Mammary epithelial cell (primary cell): ENCODE measurements at regions of chr11 and their contacts with region 1.

Region 1: DNA sequence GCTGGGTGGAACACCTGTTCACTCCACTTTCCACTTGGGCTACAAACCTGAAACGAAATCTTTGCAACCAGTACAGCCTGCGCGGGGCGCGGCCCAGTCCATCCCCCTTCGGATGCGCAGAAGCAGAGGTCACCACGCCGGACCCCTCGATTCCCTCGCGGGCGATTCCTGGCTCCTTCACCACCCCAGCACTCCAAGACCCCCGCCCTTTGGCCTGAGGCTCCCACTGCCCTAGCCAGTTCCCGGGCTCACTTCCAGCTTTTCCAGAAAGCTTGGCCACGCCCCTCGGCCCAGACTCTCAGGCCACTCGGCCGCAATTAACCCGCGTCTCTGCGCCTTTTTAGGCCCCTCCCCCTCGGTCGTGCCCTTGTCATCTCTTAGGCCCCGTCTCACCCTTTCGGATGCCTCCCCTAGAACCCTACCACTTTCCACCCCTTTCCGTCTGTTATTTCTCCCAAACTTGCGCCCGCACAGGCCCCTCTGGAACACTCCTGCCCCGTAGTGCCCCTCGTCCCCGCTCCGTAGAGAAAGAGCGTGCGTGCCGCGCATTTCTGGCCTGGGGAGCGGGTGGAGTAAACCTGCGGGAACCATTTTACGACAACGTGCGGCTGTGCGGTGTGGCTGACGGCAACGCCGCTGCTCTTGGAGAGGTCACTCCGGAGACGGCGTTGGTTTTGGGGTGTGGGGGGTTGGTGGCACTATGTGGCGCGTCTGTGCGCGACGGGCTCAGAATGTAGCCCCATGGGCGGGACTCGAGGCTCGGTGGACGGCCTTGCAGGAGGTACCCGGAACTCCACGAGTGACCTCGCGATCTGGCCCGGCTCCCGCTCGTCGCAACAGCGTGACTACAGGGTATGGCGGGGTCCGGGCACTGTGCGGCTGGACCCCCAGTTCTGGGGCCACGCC is at the start of gene DLAT:
- DNase-seq: peak; percentile 80
- H3K4me3 ChIP-seq: peak within 1 kb of the TSS; percentile 58 to 90 (median 72)
- H3K27ac ChIP-seq: peak within 1 kb of the TSS; percentile 75
- H3K4me1 ChIP-seq: peaks cover 8% of the 10 kb centered on the region
- H3K27me3 ChIP-seq: no peaks in the 10 kb centered on the region
- CTCF ChIP-seq: no peak
- total RNA-seq, gene DLAT: 38.6 to 42.0 TPM

Region 2: GRCh38 chr11:111960916-111961315 is 64.1 kb before region 1 on chr11:
- CTCF ChIA-PET with region 1: no interaction called
- dilution Hi-C with region 1: loop called (anchors 10 kb)
- in situ Hi-C with region 1: no loop called
- intact Hi-C with region 1: no loop called
- DNase-seq: peak; percentile 96
- H3K4me3 ChIP-seq: no peak overlapping the region
- H3K27ac ChIP-seq: peak overlapping the region; percentile 81
- H3K4me1 ChIP-seq: peaks cover 13% of the 10 kb centered on the region
- H3K27me3 ChIP-seq: no peaks in the 10 kb centered on the region
- CTCF ChIP-seq: no peak

Region 3: DNA sequence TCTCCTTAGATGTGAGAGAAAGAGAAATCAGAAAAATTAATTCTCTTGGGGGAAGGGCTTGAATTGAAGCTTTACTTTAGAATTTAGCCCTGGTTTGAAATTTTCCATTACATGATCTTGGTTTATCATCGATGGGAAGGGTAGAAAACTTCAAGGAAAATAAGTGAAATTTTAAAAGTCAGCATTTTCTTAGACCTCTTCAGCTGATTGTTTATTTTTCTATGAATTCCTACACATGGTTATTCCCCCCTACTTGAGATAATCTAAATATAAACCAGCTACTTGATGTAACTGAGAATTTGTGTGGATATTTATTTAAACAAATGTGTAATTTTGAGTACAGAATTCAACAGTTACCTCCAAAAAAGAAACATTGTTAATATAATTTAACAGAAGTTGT is 37.9 kb after region 1 on chr11:
- CTCF ChIA-PET with region 1: no interaction called
- dilution Hi-C with region 1: loop called (anchors 5 kb)
- in situ Hi-C with region 1: no loop called
- intact Hi-C with region 1: no loop called
- DNase-seq: no peak
- H3K4me3 ChIP-seq: no peak overlapping the region
- H3K27ac ChIP-seq: no peak overlapping the region
- H3K4me1 ChIP-seq: no peaks in the 10 kb centered on the region
- H3K27me3 ChIP-seq: no peaks in the 10 kb centered on the region
- CTCF ChIP-seq: no peak